Posterior vena cava (tissue), 2 donors: ENCODE measurements at regions of chr10 and their contacts with region 1.

Region 1: GRCh38 chr10:67115970-67116369 is 190.1 kb downstream of the LRRTM3 start:
- DNase-seq: no peak

Region 2: DNA sequence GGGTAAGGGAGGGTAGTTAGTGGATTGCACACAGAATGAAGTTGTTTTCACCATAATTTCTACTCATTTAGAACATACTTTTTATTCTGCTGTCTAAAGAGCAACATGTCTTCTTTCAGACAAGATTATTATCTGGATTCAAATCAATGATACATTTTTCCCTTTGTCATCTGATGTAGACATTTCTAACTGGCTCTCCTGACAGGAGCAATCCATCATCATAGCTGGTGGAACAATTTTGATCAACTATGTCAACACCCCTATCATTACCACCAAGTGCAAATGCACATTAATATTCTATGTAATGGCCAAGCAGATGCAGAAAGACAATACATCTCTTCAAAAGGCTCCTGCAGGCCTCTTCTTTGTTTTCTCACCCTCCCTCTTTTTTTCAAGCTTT is 863.0 kb before region 1 on chr10:
- intact Hi-C with region 1: loop called in 1 of 2 experiments (anchors 5 kb)
- DNase-seq: no peak

Region 3: GRCh38 chr10:67036808-67037207 is 79.2 kb before region 1 on chr10:
- intact Hi-C with region 1: no loop called
- DNase-seq: no peak